Spleen (tissue), 13 donors: ENCODE measurements at regions of chrX and their contacts with region 1.

Region 1: DNA sequence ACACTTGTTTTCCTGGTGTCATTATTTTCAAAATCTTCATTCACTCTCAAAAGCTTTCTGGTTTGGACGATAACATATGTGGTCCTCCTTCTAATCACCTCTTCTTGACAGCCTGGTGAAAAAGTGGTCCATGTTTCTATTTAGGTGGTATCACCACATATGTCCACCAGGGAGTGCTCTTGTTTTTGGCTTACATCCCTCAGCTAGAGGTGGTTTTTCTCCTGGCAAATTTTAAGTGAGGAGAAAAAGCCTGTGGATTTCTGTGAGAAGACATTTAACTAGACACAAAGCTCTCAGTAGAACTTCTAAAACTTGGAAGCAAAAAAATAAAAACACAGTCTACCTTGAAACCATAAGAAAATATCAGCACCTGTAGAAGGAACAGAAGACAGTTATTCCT is 58.0 kb upstream of the FRMPD4 start:
- DNase-seq: no peak
- H3K4me3 ChIP-seq: no peak overlapping the region
- H3K27ac ChIP-seq: no peak overlapping the region
- H3K4me1 ChIP-seq: no peaks in the 10 kb centered on the region
- H3K27me3 ChIP-seq: peaks cover 0 to 14% (median 0%) of the 10 kb centered on the region in 7 donors
- CTCF ChIP-seq: peak in 6 of 11 experiments; percentile 11 to 30 (median 22)
- POLR2A ChIP-seq: no peak

Region 2: GRCh38 chrX:11688201-11688600 is 392.1 kb before region 1 on chrX:
- intact Hi-C with region 1: no loop called
- DNase-seq: no peak
- H3K4me3 ChIP-seq: no peak overlapping the region
- H3K27ac ChIP-seq: no peak overlapping the region
- H3K4me1 ChIP-seq: no peaks in the 10 kb centered on the region
- H3K27me3 ChIP-seq: no peaks in the 10 kb centered on the region
- CTCF ChIP-seq: no peak
- POLR2A ChIP-seq: no peak

Region 3: DNA sequence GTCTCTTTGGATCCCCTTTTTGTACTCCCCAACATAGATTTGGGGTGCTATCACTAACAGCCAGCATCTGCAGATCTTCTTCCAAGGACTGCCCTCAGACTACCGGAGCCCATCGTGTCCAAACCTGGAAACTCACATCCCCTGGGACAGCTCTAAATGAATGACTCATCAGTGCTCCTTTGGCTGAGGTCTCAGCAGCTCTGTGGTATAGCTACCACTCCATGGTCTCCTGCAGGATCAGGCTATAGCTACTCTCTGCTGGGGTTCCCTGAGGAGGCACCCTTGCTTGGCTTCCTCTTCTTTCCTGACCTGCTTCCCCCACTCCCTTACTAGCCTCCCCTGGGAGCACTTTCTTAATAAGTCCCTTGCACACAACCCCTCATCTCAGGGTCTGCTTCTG is 613.5 kb after region 1 on chrX:
- intact Hi-C with region 1: loop called (anchors 10 kb)
- DNase-seq: no peak
- H3K4me3 ChIP-seq: no peak overlapping the region
- H3K27ac ChIP-seq: no peak overlapping the region
- H3K4me1 ChIP-seq: no peaks in the 10 kb centered on the region
- H3K27me3 ChIP-seq: peaks cover 0 to 23% (median 0%) of the 10 kb centered on the region in 7 donors
- CTCF ChIP-seq: no peak
- POLR2A ChIP-seq: no peak